Panc1 (cell line): ENCODE measurements at regions of chr1 and their contacts with region 1.

Region 1: GRCh38 chr1:36385410-36386257 is at the start of gene STK40:
- DNase-seq: peak; percentile 95
- ATAC-seq: peak; percentile 95
- H3K4me3 ChIP-seq: peak within 1 kb of the TSS; percentile 90 to 94
- H3K27ac ChIP-seq: peak within 1 kb of the TSS; percentile 99
- H3K4me1 ChIP-seq: peaks cover 33% of the 10 kb centered on the region
- H3K27me3 ChIP-seq: no peaks in the 10 kb centered on the region
- CTCF ChIP-seq: no peak
- total RNA-seq, gene STK40: 49.6 TPM

Region 2: DNA sequence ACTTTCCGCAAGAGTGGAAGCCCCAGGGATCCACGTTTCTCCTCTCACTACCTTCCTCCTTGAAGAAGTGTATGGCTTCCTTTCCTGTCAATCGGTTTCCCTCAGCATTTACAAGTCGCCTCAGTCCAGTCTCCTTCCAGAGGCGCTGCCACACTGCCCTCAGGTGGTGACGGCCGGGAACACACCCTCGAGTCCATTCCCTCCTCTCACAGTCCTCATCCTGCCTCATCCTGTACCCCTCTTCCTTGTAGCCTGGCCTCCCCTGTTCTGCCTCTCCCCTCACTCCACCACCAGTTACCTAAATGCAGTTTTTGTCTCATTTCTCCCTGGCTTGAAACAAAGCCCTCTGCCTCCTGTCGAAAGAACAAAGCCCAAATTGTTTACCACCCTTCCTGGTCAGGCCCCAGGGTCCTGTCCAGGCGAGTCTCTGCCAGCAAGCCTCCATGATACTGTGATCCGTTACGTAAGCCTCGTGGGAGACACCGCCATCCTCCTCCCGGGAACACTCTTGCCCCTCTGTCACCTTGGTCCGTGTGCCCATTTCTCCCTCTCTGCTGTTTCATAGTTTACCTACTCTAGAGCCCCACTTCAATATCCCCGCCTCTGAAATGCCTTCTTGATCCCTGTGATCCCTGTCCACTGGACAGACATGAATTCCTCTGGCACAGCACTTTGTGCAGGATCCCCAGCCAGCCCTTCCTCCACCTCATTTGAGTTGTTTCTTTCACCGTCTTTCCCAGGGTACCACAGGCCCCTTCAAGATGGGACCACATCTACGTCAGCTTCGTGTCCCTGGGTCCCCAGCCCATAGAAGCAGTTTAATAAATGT is 35.4 kb after region 1 on chr1:
- CTCF ChIA-PET with region 1: no interaction called
- POLR2A ChIA-PET with region 1: no interaction called
- in situ Hi-C with region 1: no loop called
- intact Hi-C with region 1: loop called (anchors 5 kb)
- DNase-seq: peak; percentile 83
- ATAC-seq: peak; percentile 98
- H3K4me3 ChIP-seq: no peak overlapping the region
- H3K27ac ChIP-seq: 0 out of 2 replicates have a peak overlapping the region, but pooled peaks have one; percentile 25
- H3K4me1 ChIP-seq: peaks cover 3% of the 10 kb centered on the region
- H3K27me3 ChIP-seq: no peaks in the 10 kb centered on the region
- CTCF ChIP-seq: peak; percentile 97

Region 3: DNA sequence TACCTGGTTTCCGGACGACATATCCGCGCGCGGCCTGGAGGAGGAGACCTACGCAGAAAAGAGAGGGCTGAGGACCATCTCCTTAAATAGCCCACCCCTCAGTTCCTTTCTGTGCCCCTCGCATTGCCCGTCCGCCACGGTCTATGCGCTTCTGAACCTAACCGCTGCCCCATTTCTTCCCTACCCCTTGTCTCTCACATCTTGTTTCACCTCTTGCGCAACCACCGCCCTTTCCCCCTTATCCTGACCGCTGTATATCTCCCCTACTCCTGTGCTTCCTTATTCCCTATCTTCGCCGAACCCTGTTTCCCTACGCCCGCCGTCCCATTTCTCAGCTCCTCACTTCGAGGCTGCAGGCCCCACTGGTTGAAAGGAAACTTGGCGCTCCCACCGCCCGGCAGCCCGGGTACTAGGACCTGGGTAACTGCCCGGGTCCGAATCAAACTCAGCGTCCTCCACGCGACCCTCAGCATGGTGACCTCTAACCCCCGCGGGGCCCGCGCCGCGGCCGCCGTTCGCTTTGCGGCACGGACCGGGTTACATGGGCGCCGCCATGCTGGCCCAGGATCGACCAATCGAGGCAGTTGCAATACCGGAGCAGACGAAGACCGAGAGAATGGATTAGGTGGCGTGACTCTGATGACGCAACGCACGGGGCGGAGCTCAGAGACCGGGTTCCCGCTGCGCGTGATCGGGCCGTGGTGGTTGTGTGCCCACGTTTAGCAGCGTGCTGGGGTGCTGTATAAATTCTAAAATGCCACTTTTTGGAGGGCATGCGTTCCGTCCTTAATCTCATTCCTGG is 78.4 kb after region 1 on chr1 and contains the start of gene MRPS15:
- CTCF ChIA-PET with region 1: interaction called, 4 read pairs
- POLR2A ChIA-PET with region 1: interaction called, 15 read pairs
- in situ Hi-C with region 1: no loop called
- intact Hi-C with region 1: no loop called
- DNase-seq: peak; percentile 88
- ATAC-seq: peak; percentile 96
- H3K4me3 ChIP-seq: peak within 1 kb of the TSS; percentile 93 to 99
- H3K27ac ChIP-seq: peak within 1 kb of the TSS; percentile 91
- H3K4me1 ChIP-seq: peaks cover 8% of the 10 kb centered on the region
- H3K27me3 ChIP-seq: no peaks in the 10 kb centered on the region
- CTCF ChIP-seq: no peak
- total RNA-seq, gene MRPS15: 113 TPM